HepG2 (cell line): ENCODE measurements at regions of chr20 and their contacts with region 1.

Region 1: GRCh38 chr20:50070991-50071888 is 41.7 kb downstream of the UBE2V1 start:
- DNase-seq: peak; percentile 83
- ATAC-seq: peak; percentile 81
- H3K4me3 ChIP-seq: peak overlapping the region; percentile 13 to 67 (median 18); a peak in 5 of 6 replicates
- H3K27ac ChIP-seq: no peak overlapping the region
- H3K4me1 ChIP-seq: peaks cover 72% of the 10 kb centered on the region
- H3K27me3 ChIP-seq: peaks cover 0 to 14% of the 10 kb centered on the region in 2 experiments; a peak in 1 of 5 replicates
- CTCF ChIP-seq: peak; percentile 100
- EP300 ChIP-seq: 0 out of 4 replicates have a peak, but pooled peaks of 1 of the 2 experiments have one; percentile 23
- POLR2A ChIP-seq: no peak
- RAD21 ChIP-seq: peak; percentile 100

Region 2: GRCh38 chr20:49964964-49965780 is 106.1 kb before region 1 on chr20:
- CTCF ChIA-PET with region 1: interaction called, 12 read pairs
- POLR2A ChIA-PET with region 1: interaction called, 3 read pairs
- in situ Hi-C with region 1: no loop called
- intact Hi-C with region 1: no loop called
- DNase-seq: peak; percentile 76
- ATAC-seq: peak; percentile 91
- H3K4me3 ChIP-seq: no peak overlapping the region
- H3K27ac ChIP-seq: peak overlapping the region; percentile 1
- H3K4me1 ChIP-seq: peaks cover 39% of the 10 kb centered on the region
- H3K27me3 ChIP-seq: no peaks in the 10 kb centered on the region
- CTCF ChIP-seq: peak; percentile 92
- EP300 ChIP-seq: no peak
- POLR2A ChIP-seq: no peak
- RAD21 ChIP-seq: peak; percentile 64

Region 3: GRCh38 chr20:50034567-50035208 is 36.6 kb before region 1 on chr20:
- CTCF ChIA-PET with region 1: no interaction called
- POLR2A ChIA-PET with region 1: no interaction called
- in situ Hi-C with region 1: no loop called
- intact Hi-C with region 1: no loop called
- DNase-seq: no peak
- ATAC-seq: no peak
- H3K4me3 ChIP-seq: no peak overlapping the region
- H3K27ac ChIP-seq: no peak overlapping the region
- H3K4me1 ChIP-seq: peaks cover 84% of the 10 kb centered on the region
- H3K27me3 ChIP-seq: peaks cover 3 to 14% of the 10 kb centered on the region in 2 experiments; a peak in 2 of 5 replicates
- CTCF ChIP-seq: no peak
- EP300 ChIP-seq: no peak
- POLR2A ChIP-seq: no peak
- RAD21 ChIP-seq: no peak

Region 4: DNA sequence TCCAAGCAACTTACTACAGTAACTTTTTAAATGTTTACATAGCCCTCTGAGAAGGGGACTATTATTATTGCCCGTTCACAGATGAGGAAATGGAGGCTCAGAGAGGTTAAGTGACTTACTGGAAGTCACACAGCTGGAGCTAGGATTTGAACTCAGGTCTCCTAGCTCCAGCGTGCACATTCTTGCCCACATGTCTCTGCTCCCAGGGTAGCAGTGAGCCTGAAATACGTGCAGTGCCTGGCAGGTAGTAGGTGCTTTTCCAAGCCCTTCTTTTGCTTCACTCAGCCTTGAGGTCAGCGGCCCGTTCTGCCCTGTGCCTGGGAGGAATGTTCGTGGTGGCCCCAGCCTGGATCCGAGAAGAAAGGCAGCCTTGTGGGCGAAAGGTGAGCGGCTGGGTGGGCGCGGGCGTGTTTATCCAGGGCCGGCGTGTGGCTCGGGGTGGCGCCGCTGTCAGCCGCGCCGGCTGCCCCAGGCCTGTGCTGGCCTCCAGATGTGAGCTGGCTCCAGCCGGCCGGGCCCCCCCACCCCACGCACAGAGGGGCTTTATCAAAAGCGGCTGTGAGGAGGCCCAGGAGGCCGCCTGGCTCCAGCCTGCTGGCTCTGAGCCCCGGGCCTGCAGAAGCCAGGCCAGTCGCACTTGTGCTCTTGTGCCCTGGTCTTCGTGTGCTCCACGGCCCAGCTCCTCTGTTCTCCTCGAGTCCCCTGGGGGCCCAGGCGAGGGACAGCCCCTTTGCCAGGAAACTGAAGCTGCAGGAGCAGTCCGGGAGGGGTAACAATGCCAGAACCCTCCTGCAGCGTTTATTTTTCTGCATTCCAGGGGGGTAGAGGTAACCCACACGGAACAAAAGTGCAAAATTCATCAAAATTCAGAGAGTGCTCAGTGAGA is 16.4 kb before region 1 on chr20:
- CTCF ChIA-PET with region 1: no interaction called
- POLR2A ChIA-PET with region 1: no interaction called
- in situ Hi-C with region 1: no loop called
- intact Hi-C with region 1: loop called (anchors 2 kb)
- DNase-seq: peak; percentile 67
- ATAC-seq: peak; percentile 73
- H3K4me3 ChIP-seq: peak overlapping the region; percentile 38 to 71 (median 49)
- H3K27ac ChIP-seq: no peak overlapping the region
- H3K4me1 ChIP-seq: peaks cover 51% of the 10 kb centered on the region
- H3K27me3 ChIP-seq: peaks cover 0 to 20% of the 10 kb centered on the region in 2 experiments; a peak in 3 of 5 replicates
- CTCF ChIP-seq: no peak; the same call in 1 of the 2 replicates
- EP300 ChIP-seq: peak; percentile 35 to 55; a peak in 2 of 4 replicates
- POLR2A ChIP-seq: no peak
- RAD21 ChIP-seq: no peak

Region 5: GRCh38 chr20:50710492-50711063 is 639.3 kb after region 1 on chr20:
- CTCF ChIA-PET with region 1: no interaction called
- POLR2A ChIA-PET with region 1: no interaction called
- in situ Hi-C with region 1: no loop called
- intact Hi-C with region 1: no loop called
- DNase-seq: peak; percentile 60
- ATAC-seq: peak; percentile 74
- H3K4me3 ChIP-seq: peak overlapping the region in 2 of 3 experiments; percentile 8 to 47; a peak in 4 of 6 replicates
- H3K27ac ChIP-seq: no peak overlapping the region
- H3K4me1 ChIP-seq: peaks cover 47% of the 10 kb centered on the region
- H3K27me3 ChIP-seq: peaks cover 0 to 2% of the 10 kb centered on the region in 2 experiments; a peak in 1 of 5 replicates
- CTCF ChIP-seq: no peak
- EP300 ChIP-seq: no peak; a peak in 1 of 4 replicates
- POLR2A ChIP-seq: no peak
- RAD21 ChIP-seq: no peak